Activated CD8-positive, alpha-beta T cell treated with anti-CD3 and anti-CD28 coated beads for 36 hours (primary cell): ENCODE measurements at regions of chr4 and their contacts with region 1.

Region 1: GRCh38 chr4:113636438-113636818 is 125.1 kb downstream of the CAMK2D start:
- DNase-seq: peak; percentile 24
- ATAC-seq: peak; percentile 79
- H3K4me3 Mint-ChIP-seq: peak overlapping the region; percentile 45
- H3K27ac Mint-ChIP-seq: peak overlapping the region; percentile 88
- H3K4me1 Mint-ChIP-seq: peaks cover 54% of the 10 kb centered on the region
- H3K27me3 Mint-ChIP-seq: no peaks in the 10 kb centered on the region
- CTCF ChIP-seq: no peak

Region 2: DNA sequence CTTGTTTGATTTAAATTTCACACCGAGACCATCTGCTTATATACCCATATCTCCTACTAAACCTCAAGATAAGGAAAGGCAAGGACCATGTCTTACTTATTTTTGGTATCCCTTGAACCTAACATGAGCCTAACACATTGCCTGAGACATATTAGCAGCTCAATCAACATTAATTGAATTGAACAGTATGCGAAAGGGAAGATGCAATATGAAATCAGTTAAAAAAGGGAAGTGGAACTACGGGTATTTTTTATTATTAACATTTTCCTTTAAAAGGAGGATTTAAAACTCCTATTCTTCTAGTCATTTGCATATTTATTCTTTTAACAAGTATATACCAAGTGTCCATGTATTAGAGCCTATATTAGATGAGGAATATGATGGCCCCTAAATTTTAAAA is 71.9 kb before region 1 on chr4:
- CTCF ChIA-PET with region 1: no interaction called
- POLR2A ChIA-PET with region 1: no interaction called
- intact Hi-C with region 1: loop called (anchors 5 kb)
- DNase-seq: no peak
- ATAC-seq: no peak
- H3K4me3 Mint-ChIP-seq: no peak overlapping the region
- H3K27ac Mint-ChIP-seq: peak overlapping the region; percentile 0
- H3K4me1 Mint-ChIP-seq: peaks cover 45% of the 10 kb centered on the region
- H3K27me3 Mint-ChIP-seq: no peaks in the 10 kb centered on the region
- CTCF ChIP-seq: no peak

Region 3: GRCh38 chr4:113673450-113673849 is 37.0 kb after region 1 on chr4:
- CTCF ChIA-PET with region 1: no interaction called
- POLR2A ChIA-PET with region 1: no interaction called
- intact Hi-C with region 1: loop called (anchors 5 kb)
- DNase-seq: peak; percentile 77
- ATAC-seq: peak; percentile 99
- H3K4me3 Mint-ChIP-seq: no peak overlapping the region
- H3K27ac Mint-ChIP-seq: peak overlapping the region; percentile 58
- H3K4me1 Mint-ChIP-seq: peaks cover 57% of the 10 kb centered on the region
- H3K27me3 Mint-ChIP-seq: no peaks in the 10 kb centered on the region
- CTCF ChIP-seq: no peak

Region 4: DNA sequence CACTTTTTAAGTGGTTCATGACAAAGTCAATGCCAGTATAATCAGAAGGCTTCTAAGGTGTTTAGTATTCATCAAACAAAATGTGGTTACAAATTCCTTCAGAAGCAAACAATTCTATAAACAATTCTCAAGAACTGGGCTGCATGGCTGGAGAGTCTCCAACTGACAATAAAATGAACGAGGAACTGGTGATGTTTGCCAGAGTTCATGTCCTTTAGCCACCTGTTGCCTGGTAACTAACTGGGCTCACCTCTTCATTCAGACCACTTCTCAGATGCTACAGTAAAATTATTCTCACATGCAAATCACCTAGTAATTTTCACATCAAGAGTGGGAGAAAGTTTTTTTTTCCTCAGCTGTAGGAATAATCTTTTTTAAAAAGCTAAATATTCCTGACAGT is 71.8 kb after region 1 on chr4:
- CTCF ChIA-PET with region 1: no interaction called
- POLR2A ChIA-PET with region 1: no interaction called
- intact Hi-C with region 1: no loop called
- DNase-seq: no peak
- ATAC-seq: no peak
- H3K4me3 Mint-ChIP-seq: no peak overlapping the region
- H3K27ac Mint-ChIP-seq: no peak overlapping the region
- H3K4me1 Mint-ChIP-seq: peaks cover 42% of the 10 kb centered on the region
- H3K27me3 Mint-ChIP-seq: no peaks in the 10 kb centered on the region
- CTCF ChIP-seq: no peak